ENCODE measurements at regions of chr3 and their contacts with region 1.

Region 1: GRCh38 chr3:123028233-123028828 is 768 bp upstream of the SEMA5B start:
- DNase-seq: peak; percentile 72
- ATAC-seq: peak; percentile 79
- H3K4me3 ChIP-seq: peak overlapping the region; percentile 24
- H3K27ac ChIP-seq: no peak overlapping the region
- H3K4me1 ChIP-seq: peaks cover 5% of the 10 kb centered on the region; the same call in 1 of the 2 replicates
- H3K27me3 ChIP-seq: peaks cover 87% of the 10 kb centered on the region
- CTCF ChIP-seq: peak; percentile 65
- POLR2A ChIP-seq: no peak
- RAD21 ChIP-seq: peak; percentile 73

Region 2: GRCh38 chr3:122392868-122393844 is 635.2 kb before region 1 on chr3:
- CTCF ChIA-PET with region 1: no interaction called
- POLR2A ChIA-PET with region 1: no interaction called
- dilution Hi-C with region 1: no loop called
- in situ Hi-C with region 1: no loop called
- intact Hi-C with region 1: loop called (anchors 1 kb)
- DNase-seq: peak; percentile 66
- ATAC-seq: peak; percentile 55; the same call in 1 of the 2 replicates
- H3K4me3 ChIP-seq: no peak overlapping the region
- H3K27ac ChIP-seq: no peak overlapping the region
- H3K4me1 ChIP-seq: peaks cover 5% of the 10 kb centered on the region
- H3K27me3 ChIP-seq: no peaks in the 10 kb centered on the region
- CTCF ChIP-seq: peak; percentile 74
- POLR2A ChIP-seq: no peak
- RAD21 ChIP-seq: peak; percentile 71

Region 3: DNA sequence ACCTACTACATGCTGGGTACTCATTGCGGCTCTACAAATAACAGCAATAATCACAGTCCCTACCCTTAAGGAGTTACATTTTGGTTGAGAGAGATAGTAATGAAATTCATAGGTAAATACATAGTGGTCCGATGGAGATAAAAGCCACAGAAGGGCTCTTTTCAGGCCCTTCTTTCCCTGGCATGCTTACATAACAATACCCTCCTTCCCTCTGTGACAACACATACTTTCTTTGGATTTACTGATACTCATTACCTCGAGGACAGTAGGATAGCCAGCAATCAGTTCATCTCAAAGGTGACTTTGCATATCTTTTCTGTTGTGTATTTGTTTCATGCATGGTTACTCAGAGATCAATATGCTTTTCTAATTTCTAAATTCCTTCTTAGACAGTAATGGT is 289.2 kb before region 1 on chr3:
- CTCF ChIA-PET with region 1: no interaction called
- POLR2A ChIA-PET with region 1: no interaction called
- dilution Hi-C with region 1: no loop called
- in situ Hi-C with region 1: no loop called
- intact Hi-C with region 1: no loop called
- DNase-seq: no peak
- ATAC-seq: no peak
- H3K4me3 ChIP-seq: no peak overlapping the region
- H3K27ac ChIP-seq: no peak overlapping the region
- H3K4me1 ChIP-seq: no peaks in the 10 kb centered on the region
- H3K27me3 ChIP-seq: no peaks in the 10 kb centered on the region
- CTCF ChIP-seq: no peak
- POLR2A ChIP-seq: no peak
- RAD21 ChIP-seq: no peak

Region 4: DNA sequence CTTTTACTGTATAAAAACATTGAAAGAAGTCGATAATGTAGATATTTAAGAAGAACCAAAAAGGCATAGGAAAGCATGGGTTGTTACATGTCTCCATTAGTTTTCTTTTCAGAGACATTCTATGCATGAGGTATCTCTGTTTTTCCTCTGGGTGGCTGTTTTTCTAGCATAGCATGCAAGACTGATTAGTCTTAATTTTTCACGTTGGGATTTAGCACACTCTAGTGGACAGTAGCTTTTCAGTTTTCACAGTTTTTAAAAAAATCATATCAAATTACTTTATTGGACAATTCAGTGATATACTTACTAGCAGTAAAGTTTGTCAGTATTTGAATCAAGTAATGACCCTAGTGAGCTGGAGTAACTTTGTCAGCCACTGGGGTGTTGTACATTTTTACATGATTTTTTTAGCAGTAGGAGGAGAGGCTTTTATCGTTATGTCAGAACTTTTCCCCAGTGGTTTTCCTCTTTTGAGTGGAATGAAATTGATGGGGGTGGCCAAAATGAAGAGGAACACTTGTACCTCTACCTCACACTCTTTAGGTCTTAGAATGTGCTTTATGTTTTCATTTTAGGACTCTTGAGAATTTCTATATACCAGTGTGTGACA is 230.6 kb after region 1 on chr3:
- CTCF ChIA-PET with region 1: no interaction called
- POLR2A ChIA-PET with region 1: no interaction called
- dilution Hi-C with region 1: no loop called
- in situ Hi-C with region 1: no loop called
- intact Hi-C with region 1: loop called (anchors 5 kb)
- DNase-seq: peak; percentile 69
- ATAC-seq: peak; percentile 96
- H3K4me3 ChIP-seq: no peak overlapping the region
- H3K27ac ChIP-seq: no peak overlapping the region
- H3K4me1 ChIP-seq: no peaks in the 10 kb centered on the region
- H3K27me3 ChIP-seq: no peaks in the 10 kb centered on the region
- CTCF ChIP-seq: peak; percentile 76
- POLR2A ChIP-seq: no peak
- RAD21 ChIP-seq: peak; percentile 70